Body of pancreas (tissue), 4 donors: ENCODE measurements at regions of chr10 and their contacts with region 1.

Region 1: DNA sequence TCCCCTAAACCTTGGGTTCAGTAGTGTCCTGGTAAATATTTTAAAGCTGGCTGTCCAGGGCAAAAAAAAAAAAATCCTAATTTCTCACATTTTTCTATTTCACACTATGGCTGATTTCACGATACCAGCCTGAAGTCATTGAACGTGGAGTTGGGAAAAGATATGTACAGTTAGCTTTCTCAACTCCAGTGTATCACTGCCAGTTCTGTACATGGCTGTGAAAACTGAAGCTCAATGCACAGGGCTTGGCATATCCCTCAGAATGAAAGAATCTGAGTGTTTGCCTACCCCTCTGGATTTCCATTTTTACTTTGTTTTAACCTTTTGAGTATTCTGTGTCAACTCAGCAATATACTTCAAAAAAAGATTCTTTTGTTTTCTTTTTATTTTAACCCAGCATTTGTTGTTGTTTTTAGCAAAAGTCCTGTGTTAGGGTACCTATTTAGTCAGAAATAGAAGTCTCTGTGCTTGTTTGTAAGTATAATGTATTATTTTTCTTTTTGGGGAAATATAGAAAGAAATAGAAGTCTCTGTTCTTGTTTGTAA is 274.5 kb downstream of the ADK start:
- DNase-seq: no peak
- ATAC-seq: no peak
- H3K4me3 ChIP-seq: no peak overlapping the region
- H3K27ac ChIP-seq: no peak overlapping the region
- H3K4me1 ChIP-seq: no peaks in the 10 kb centered on the region
- H3K27me3 ChIP-seq: no peaks in the 10 kb centered on the region
- CTCF ChIP-seq: no peak
- POLR2A ChIP-seq: no peak

Region 2: GRCh38 chr10:74314166-74314565 is 111.4 kb before region 1 on chr10:
- intact Hi-C with region 1: no loop called
- DNase-seq: no peak
- ATAC-seq: no peak
- H3K4me3 ChIP-seq: no peak overlapping the region
- H3K27ac ChIP-seq: no peak overlapping the region
- H3K4me1 ChIP-seq: no peaks in the 10 kb centered on the region
- H3K27me3 ChIP-seq: no peaks in the 10 kb centered on the region
- CTCF ChIP-seq: no peak
- POLR2A ChIP-seq: no peak

Region 3: DNA sequence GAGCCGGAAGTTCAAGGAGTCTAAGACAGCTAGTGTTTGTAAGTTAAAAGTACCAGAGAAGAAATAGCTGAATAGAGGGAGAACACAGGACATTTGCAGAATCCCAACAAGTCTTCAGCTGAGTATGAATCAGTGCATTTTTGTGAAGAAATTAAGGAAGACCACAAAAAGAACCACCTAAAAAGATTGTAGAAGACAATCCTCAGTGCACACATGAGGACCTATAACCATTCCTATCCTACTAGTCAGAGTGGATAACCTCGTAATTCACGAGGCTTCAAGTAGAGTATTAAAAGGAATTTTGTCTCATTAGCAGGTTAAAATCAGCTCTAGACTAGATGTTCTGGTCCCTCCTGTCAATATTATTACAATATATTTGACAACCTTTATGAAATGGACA is 105.5 kb after region 1 on chr10:
- intact Hi-C with region 1: loop called (anchors 5 kb)
- DNase-seq: no peak
- ATAC-seq: no peak
- H3K4me3 ChIP-seq: no peak overlapping the region
- H3K27ac ChIP-seq: no peak overlapping the region
- H3K4me1 ChIP-seq: no peaks in the 10 kb centered on the region
- H3K27me3 ChIP-seq: no peaks in the 10 kb centered on the region
- CTCF ChIP-seq: no peak
- POLR2A ChIP-seq: no peak